ENCODE measurements at regions of chr4 and their contacts with region 1.

Region 1: GRCh38 chr4:2755837-2756694 is at the start of gene TNIP2:
- DNase-seq: peak; percentile 77
- ATAC-seq: peak; percentile 72 to 85
- H3K4me3 ChIP-seq: peak within 1 kb of the TSS; percentile 68 to 91 (median 81)
- H3K27ac ChIP-seq: peak within 1 kb of the TSS; percentile 72 to 87 (median 84)
- H3K4me1 ChIP-seq: peaks cover 12 to 19% of the 10 kb centered on the region in 2 donors
- H3K27me3 ChIP-seq: no peaks in the 10 kb centered on the region
- CTCF ChIP-seq: peak in 4 of 5 experiments; percentile 47 to 65 (median 56)
- POLR2A ChIP-seq: peak; percentile 62 to 79
- total RNA-seq, gene TNIP2: 36.1 to 81.9 (median 66.5) TPM

Region 2: DNA sequence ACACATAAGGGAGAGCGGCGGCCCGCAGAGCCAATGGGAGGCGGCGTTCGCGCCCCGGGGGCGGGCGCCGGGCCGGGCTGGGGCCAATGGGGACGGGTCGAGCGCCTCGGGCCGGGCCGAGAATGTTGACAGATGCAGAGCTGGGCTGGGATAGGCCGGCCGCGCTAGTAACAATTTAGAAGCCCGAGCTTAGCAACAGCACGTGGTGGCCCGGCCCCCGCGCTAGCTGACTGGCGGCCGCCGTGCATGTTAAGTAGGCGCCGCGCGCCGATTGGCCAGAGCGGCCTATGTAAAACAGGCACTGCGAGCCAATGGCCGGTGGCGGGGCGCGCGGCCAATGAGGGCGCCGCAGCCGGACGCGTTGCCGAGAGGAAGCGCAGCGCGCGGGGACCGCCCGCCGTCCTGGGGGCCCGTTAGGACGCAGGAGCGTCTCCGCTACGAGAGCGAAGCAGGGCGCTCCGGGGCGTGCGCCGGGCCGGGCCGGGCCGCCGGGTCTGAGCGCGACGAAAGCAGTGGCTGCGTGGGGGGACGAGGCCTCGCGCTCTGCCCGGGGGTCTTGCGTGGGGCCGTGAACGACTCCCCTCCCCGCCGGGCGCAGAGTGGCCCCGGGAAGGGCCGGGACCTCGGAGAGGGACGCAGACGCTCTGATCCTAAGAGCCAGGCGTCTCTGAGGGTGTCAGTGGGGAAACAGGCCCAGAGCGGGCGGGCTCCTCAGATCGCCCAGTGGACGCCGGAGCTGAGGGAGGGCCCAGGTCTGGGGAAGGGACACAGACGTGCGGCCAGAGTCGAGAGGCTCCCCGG is 493.7 kb before region 1 on chr4:
- in situ Hi-C with region 1: no loop called
- intact Hi-C with region 1: loop called (anchors 10 kb)
- DNase-seq: peak; percentile 99 to 100
- ATAC-seq: peak; percentile 81 to 82
- H3K4me3 ChIP-seq: peak overlapping the region; percentile 56 to 91 (median 76)
- H3K27ac ChIP-seq: peak overlapping the region; percentile 93 to 99 (median 96)
- H3K4me1 ChIP-seq: peaks cover 55 to 77% of the 10 kb centered on the region in 2 donors
- H3K27me3 ChIP-seq: no peaks in the 10 kb centered on the region
- CTCF ChIP-seq: no peak
- POLR2A ChIP-seq: peak; percentile 91 to 98

Region 3: DNA sequence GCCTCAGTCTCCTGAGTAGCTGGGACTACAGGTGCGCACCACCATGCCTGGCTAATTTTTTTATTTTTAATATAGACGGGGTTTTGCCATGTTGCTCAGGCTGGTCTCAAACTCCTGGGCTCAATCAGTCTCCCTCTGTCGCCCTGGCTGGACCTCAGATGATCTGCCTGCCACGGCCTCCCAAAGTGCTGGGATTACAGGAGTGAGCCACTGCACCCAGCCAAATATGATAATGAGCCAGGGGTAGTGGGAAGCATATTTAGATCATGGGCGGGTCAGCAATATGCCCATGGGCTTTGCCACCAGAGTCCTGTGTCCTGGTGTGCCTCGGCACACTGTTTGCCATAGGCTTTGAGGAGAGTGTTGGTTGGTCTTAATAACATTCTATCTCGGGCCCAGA is 147.8 kb before region 1 on chr4:
- in situ Hi-C with region 1: no loop called
- intact Hi-C with region 1: no loop called
- DNase-seq: no peak
- ATAC-seq: no peak
- H3K4me3 ChIP-seq: no peak overlapping the region
- H3K27ac ChIP-seq: no peak overlapping the region
- H3K4me1 ChIP-seq: peaks cover 40 to 62% of the 10 kb centered on the region in 2 donors
- H3K27me3 ChIP-seq: no peaks in the 10 kb centered on the region
- CTCF ChIP-seq: no peak
- POLR2A ChIP-seq: no peak

Region 4: DNA sequence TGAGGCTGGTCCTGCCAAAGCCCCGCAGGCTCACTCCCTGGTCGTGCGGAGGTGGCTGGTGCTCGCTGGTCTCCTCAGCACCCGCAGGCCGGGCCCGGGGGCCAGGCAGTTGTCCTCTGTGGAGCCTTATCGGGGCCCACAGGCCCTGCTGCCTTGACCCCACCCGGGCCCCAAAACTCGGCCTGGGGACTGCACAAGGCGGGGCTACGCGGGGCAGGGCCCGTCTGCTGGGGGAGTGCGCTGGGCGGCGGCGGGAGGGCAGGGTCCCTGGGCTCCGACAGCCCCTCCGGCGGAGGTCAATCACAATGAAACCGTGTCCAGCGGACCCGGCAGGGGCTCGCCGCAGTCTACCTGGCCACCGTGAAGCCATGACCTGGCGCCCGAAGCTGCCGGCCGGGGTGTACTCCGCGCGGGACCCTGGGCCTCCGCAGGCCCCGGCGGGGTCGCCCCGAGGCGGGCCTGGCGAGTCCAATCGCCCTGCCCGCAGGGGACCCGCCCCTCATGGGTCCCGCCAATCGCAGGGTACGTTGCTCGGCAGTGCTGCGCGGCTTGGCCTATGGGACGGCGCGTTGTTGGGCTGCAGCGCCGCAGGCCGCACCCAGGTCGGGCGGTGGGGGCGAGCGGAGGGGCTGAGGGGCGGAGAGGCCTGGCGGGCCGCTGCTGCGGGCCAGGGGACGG is 87.3 kb after region 1 on chr4 and contains the start of gene ADD1:
- in situ Hi-C with region 1: no loop called
- intact Hi-C with region 1: loop called (anchors 5 kb)
- DNase-seq: peak; percentile 87 to 93
- ATAC-seq: peak; percentile 90 to 91
- H3K4me3 ChIP-seq: peak within 1 kb of the TSS; percentile 85 to 99 (median 89)
- H3K27ac ChIP-seq: peak within 1 kb of the TSS; percentile 92 to 97 (median 96)
- H3K4me1 ChIP-seq: peaks cover 41 to 43% of the 10 kb centered on the region in 2 donors
- H3K27me3 ChIP-seq: no peaks in the 10 kb centered on the region
- CTCF ChIP-seq: no peak
- POLR2A ChIP-seq: peak; percentile 89 to 92
- total RNA-seq, gene ADD1: 144 to 255 (median 178) TPM

Region 5: GRCh38 chr4:2934813-2935761 is 179.0 kb after region 1 on chr4:
- in situ Hi-C with region 1: loop called in 1 of 4 experiments (anchors 25 kb)
- intact Hi-C with region 1: loop called (anchors 2 kb)
- DNase-seq: peak; percentile 89 to 92
- ATAC-seq: peak; percentile 77 to 83
- H3K4me3 ChIP-seq: peak overlapping the region; percentile 75 to 98 (median 94)
- H3K27ac ChIP-seq: peak overlapping the region; percentile 86 to 98 (median 94)
- H3K4me1 ChIP-seq: peaks cover 29 to 30% of the 10 kb centered on the region in 2 donors
- H3K27me3 ChIP-seq: no peaks in the 10 kb centered on the region
- CTCF ChIP-seq: no peak
- POLR2A ChIP-seq: peak; percentile 90 to 95